Ovary (tissue), 10 donors: ENCODE measurements at regions of chr16 and their contacts with region 1.

Region 1: GRCh38 chr16:81544664-81545271 is 100.2 kb downstream of the CMIP start:
- DNase-seq: no peak
- H3K4me3 ChIP-seq: no peak overlapping the region
- H3K27ac ChIP-seq: no peak overlapping the region
- H3K4me1 ChIP-seq: peaks cover 20% of the 10 kb centered on the region
- H3K27me3 ChIP-seq: no peaks in the 10 kb centered on the region
- CTCF ChIP-seq: no peak
- EP300 ChIP-seq: no peak
- POLR2A ChIP-seq: no peak

Region 2: GRCh38 chr16:81437865-81438264 is 106.9 kb before region 1 on chr16:
- intact Hi-C with region 1: no loop called
- DNase-seq: no peak
- H3K4me3 ChIP-seq: no peak overlapping the region
- H3K27ac ChIP-seq: no peak overlapping the region
- H3K4me1 ChIP-seq: peaks cover 3% of the 10 kb centered on the region
- H3K27me3 ChIP-seq: no peaks in the 10 kb centered on the region
- CTCF ChIP-seq: no peak
- EP300 ChIP-seq: no peak
- POLR2A ChIP-seq: no peak

Region 3: DNA sequence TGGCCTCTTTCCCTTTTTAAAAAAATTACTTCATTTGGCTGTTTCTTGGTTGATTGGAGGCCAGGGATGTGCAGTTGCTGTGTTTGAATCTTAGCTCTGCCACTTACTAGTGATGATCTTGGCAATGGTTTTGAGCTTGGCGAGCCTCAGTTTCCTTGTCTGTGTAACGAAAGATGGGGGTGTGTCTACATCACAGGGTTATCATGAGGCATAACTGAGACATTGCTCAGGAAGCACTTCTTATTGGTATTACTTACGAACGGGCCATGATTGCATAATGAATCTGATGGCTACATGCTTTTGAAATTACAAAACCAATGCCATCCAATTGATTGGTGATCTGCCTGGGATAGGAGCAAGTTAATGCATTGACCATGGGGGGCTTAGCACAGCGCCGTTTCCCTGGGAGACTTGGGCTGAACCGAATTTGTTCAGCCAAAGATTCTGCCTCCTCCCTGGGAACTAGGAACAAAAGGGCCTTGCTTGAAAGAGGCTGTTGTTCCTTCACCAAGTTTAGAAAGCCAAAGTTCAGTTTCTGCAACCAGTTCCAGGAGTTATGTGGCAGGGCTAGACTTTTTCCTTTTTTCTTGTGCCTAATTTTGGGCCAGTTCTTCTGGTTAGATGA is 78.3 kb before region 1 on chr16:
- intact Hi-C with region 1: no loop called
- DNase-seq: no peak
- H3K4me3 ChIP-seq: no peak overlapping the region
- H3K27ac ChIP-seq: no peak overlapping the region
- H3K4me1 ChIP-seq: peaks cover 8% of the 10 kb centered on the region
- H3K27me3 ChIP-seq: no peaks in the 10 kb centered on the region
- CTCF ChIP-seq: no peak
- EP300 ChIP-seq: no peak
- POLR2A ChIP-seq: no peak

Region 4: DNA sequence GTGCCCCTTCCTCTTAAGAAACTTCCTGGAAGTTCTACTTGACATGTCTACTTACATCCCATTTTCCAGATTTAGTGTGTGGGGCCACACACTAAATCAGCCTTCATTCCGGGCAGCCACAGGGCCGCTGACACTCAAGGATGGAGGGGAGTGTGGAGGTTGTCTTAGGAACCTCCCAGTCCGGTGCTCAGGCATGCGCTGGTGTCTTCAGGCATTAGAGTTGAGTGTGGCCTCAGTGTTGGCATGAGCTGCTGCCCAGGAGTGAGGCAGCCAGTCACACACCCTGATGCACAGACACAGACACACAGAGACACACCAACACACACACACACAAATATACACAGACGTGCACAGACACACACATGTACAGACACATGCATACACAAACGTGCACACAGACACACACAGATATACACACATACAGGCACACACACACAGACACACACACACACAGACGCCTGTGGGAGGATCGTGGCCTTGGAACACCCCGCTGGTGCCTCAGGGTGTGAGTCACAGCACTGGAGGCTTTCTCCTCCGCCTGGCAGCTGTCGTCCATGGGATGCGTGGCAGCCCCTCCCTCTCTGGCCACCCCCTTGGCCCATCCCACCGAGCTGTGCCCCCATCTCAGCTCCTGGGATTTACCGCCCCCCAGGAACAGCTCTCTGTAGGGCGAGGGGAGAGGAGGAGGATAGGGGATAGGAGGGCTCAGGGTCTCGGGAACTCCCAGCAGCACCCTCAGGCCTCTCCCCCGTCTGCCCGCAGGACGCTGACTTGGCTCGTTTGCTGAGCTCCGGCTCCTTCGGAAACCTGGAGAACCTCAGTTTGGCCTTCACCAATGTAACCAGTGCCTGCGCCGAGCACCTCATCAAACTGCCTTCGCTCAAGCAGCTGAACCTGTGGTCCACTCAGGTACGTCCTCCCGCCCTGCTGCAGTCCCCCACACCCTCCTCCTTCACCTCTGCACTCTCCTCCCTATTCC is 158.7 kb after region 1 on chr16:
- intact Hi-C with region 1: loop called in 1 of 4 experiments (anchors 10 kb)
- DNase-seq: peak; percentile 72 to 87 (median 83)
- H3K4me3 ChIP-seq: no peak overlapping the region
- H3K27ac ChIP-seq: no peak overlapping the region
- H3K4me1 ChIP-seq: peaks cover 8% of the 10 kb centered on the region
- H3K27me3 ChIP-seq: no peaks in the 10 kb centered on the region
- CTCF ChIP-seq: no peak
- EP300 ChIP-seq: no peak
- POLR2A ChIP-seq: no peak